Mammary epithelial cell (primary cell): ENCODE measurements at regions of chr7 and their contacts with region 1.

Region 1: GRCh38 chr7:50679218-50680007 is 103.3 kb downstream of the GRB10 start:
- DNase-seq: peak; percentile 50
- H3K4me3 ChIP-seq: no peak overlapping the region
- H3K27ac ChIP-seq: no peak overlapping the region
- H3K4me1 ChIP-seq: no peaks in the 10 kb centered on the region
- H3K27me3 ChIP-seq: peaks cover 2% of the 10 kb centered on the region
- CTCF ChIP-seq: peak; percentile 27 to 53

Region 2: DNA sequence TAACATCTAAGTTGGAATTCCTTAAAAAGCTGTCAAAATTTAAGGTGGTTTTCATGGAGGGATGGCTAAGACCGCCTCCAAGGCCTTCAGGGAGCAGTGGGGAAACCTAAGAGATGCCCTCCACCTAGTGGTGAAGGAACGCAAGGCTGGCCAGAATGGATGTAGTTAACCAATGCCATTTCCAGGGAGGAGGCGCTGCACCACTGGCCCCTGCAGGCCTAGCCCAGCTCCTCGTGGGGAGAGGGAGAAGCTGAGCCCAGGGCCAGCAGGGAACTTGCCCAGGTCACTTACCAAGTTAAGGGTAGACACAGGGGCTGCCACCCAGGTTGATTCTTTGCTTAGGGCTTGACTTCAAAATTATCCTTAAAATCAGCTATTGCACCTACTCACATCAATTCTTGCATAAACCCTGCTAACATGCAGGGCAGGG is 261.3 kb before region 1 on chr7:
- CTCF ChIA-PET with region 1: no interaction called
- dilution Hi-C with region 1: no loop called
- in situ Hi-C with region 1: no loop called
- intact Hi-C with region 1: loop called (anchors 1 kb)
- DNase-seq: peak; percentile 71
- H3K4me3 ChIP-seq: no peak overlapping the region
- H3K27ac ChIP-seq: no peak overlapping the region
- H3K4me1 ChIP-seq: no peaks in the 10 kb centered on the region
- H3K27me3 ChIP-seq: no peaks in the 10 kb centered on the region
- CTCF ChIP-seq: peak; percentile 97 to 98

Region 3: DNA sequence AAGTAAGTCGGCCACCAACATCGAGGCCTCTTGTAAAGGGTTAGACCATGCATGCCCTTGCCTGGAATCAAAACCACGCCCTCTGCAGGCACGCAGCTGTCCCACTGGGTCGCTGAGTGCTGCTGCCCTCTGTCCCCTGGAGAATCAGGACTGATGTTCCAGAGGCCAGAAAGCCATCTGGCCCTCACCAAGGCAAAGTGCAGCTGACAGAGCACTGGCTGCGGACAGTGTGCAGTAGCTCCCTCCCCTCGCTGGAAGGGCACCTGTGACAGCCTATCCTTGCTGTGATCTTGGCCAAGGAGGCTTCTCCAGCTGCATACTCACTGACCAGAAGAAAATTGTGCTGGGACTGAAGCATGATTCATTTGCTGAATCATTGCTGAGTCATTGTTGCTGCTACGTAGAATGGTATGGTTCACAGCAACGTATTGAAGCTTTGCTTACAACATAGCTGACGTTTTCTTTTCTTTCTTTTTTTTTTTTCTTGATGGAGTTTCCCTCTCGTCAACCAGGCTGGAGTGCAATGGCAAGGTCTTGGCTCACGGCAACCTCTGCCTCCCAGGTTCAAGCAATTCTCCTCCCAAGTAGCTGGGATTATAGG is 144.6 kb before region 1 on chr7:
- CTCF ChIA-PET with region 1: no interaction called
- dilution Hi-C with region 1: no loop called
- in situ Hi-C with region 1: no loop called
- intact Hi-C with region 1: no loop called
- DNase-seq: peak; percentile 99
- H3K4me3 ChIP-seq: no peak overlapping the region
- H3K27ac ChIP-seq: peak overlapping the region; percentile 88
- H3K4me1 ChIP-seq: peaks cover 37% of the 10 kb centered on the region
- H3K27me3 ChIP-seq: no peaks in the 10 kb centered on the region
- CTCF ChIP-seq: peak in 1 of 2 donors; percentile 13

Region 4: DNA sequence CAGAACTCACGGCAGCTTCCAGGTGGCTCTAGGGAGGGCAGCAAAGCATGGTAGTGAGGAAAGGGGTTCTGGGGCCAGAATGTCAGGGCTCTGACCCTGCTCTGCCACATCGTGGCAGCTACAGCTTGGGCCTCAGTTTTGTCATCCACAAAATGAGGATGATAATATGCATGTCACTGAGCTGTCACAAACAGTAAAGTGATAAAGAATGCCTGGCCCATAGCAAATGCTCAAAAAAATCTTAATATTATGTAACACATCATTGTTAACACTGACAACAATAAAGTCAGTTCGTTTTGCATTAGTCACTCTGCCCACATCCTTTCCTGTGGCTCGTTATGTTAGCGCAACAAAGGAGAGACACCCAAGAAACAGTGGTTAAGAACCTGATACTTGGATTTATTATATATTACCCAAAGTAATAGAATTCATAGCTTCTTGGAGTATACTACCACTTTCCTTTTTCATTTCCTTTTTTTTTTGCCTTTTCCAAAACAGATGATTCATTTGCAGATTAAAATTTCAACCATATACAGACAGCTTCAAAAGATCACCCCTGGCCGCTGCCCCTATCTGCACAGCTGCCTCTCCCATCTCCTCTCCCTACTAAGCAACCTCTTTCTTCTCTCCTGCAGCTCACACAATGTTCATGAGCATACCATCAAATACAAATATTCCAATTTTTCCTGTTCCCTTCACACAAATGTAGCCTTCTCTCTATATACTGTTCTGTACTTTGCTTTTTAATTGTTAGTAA is 68.7 kb before region 1 on chr7:
- CTCF ChIA-PET with region 1: no interaction called
- dilution Hi-C with region 1: no loop called
- in situ Hi-C with region 1: no loop called
- intact Hi-C with region 1: loop called (anchors 1 kb)
- DNase-seq: peak; percentile 81
- H3K4me3 ChIP-seq: no peak overlapping the region
- H3K27ac ChIP-seq: no peak overlapping the region
- H3K4me1 ChIP-seq: peaks cover 16% of the 10 kb centered on the region
- H3K27me3 ChIP-seq: peaks cover 2% of the 10 kb centered on the region
- CTCF ChIP-seq: no peak

Region 5: GRCh38 chr7:50739744-50740435 is 60.5 kb after region 1 on chr7:
- CTCF ChIA-PET with region 1: no interaction called
- dilution Hi-C with region 1: no loop called
- in situ Hi-C with region 1: no loop called
- intact Hi-C with region 1: loop called (anchors 10 kb)
- DNase-seq: no peak
- H3K4me3 ChIP-seq: no peak overlapping the region
- H3K27ac ChIP-seq: no peak overlapping the region
- H3K4me1 ChIP-seq: no peaks in the 10 kb centered on the region
- H3K27me3 ChIP-seq: no peaks in the 10 kb centered on the region
- CTCF ChIP-seq: no peak

Region 6: DNA sequence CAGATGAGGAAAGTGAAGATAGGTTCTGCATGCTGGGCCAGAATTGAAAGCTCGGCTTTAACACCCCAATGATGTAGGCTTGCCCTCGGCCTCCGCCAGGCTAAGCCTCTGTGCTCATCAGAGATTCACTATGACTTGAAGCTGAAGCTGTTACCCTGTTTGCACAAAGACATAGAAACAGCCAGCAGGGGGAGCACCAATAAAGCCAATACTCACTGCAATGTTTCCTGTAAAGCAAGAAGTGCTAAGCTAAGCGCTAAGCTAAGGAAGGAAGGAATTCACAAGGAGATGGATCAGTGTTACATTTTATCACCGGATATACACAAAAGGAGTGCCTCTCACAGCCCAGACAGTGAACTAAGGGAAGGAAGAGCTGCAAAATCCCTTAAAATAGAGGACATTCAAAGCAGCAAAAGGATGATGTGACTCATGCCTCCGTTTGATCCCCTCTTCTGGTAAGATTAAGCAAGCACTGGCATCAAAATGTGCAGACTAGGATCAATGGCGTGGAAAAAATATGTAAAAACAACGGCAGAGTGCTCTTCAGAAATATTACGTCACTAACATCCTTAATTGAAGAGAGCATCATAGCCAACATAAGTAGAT is 483.4 kb after region 1 on chr7:
- CTCF ChIA-PET with region 1: no interaction called
- dilution Hi-C with region 1: no loop called
- in situ Hi-C with region 1: no loop called
- intact Hi-C with region 1: loop called (anchors 1 kb)
- DNase-seq: peak; percentile 72
- H3K4me3 ChIP-seq: no peak overlapping the region
- H3K27ac ChIP-seq: no peak overlapping the region
- H3K4me1 ChIP-seq: no peaks in the 10 kb centered on the region
- H3K27me3 ChIP-seq: peaks cover 2% of the 10 kb centered on the region
- CTCF ChIP-seq: peak; percentile 87 to 90